ENCODE measurements at regions of chr7 and their contacts with region 1.

Region 1: GRCh38 chr7:141231018-141231792 is 157.3 kb downstream of the TMEM178B start:
- DNase-seq: peak; percentile 28
- ATAC-seq: peak; percentile 97
- H3K4me3 ChIP-seq: no peak overlapping the region; a peak in 1 of 6 replicates
- H3K27ac ChIP-seq: no peak overlapping the region
- H3K4me1 ChIP-seq: peaks cover 13% of the 10 kb centered on the region
- H3K27me3 ChIP-seq: no peaks in the 10 kb centered on the region
- CTCF ChIP-seq: peak; percentile 82
- EP300 ChIP-seq: no peak
- POLR2A ChIP-seq: no peak
- RAD21 ChIP-seq: peak; percentile 68

Region 2: DNA sequence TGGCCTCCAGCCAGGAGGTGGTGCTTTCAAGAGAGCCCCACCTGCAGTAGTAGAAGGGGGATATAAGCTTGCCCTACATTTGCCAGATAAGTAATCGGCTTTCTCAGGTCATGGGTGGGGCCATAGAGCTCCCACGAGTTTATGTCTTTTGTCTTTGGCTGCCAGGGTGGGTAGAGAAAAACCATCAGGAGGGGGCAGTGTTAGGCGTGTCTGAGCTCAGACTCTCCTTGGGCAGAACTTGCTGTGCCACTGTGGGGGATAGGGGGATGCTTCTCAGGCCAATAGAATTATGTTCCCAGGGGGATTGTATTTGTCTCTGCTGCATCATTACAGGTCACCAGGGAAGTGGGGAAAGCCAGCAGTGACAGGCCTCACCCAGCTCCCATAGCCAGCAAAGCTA is 204.2 kb before region 1 on chr7:
- CTCF ChIA-PET with region 1: no interaction called
- POLR2A ChIA-PET with region 1: no interaction called
- in situ Hi-C with region 1: no loop called
- intact Hi-C with region 1: loop called (anchors 1 kb)
- DNase-seq: no peak
- ATAC-seq: peak; percentile 67
- H3K4me3 ChIP-seq: no peak overlapping the region
- H3K27ac ChIP-seq: no peak overlapping the region
- H3K4me1 ChIP-seq: no peaks in the 10 kb centered on the region
- H3K27me3 ChIP-seq: no peaks in the 10 kb centered on the region
- CTCF ChIP-seq: peak; percentile 37
- EP300 ChIP-seq: no peak
- POLR2A ChIP-seq: no peak
- RAD21 ChIP-seq: no peak

Region 3: GRCh38 chr7:141276031-141276430 is 44.8 kb after region 1 on chr7:
- CTCF ChIA-PET with region 1: no interaction called
- POLR2A ChIA-PET with region 1: no interaction called
- in situ Hi-C with region 1: no loop called
- intact Hi-C with region 1: loop called (anchors 1 kb)
- DNase-seq: no peak
- ATAC-seq: no peak
- H3K4me3 ChIP-seq: no peak overlapping the region
- H3K27ac ChIP-seq: no peak overlapping the region
- H3K4me1 ChIP-seq: no peaks in the 10 kb centered on the region
- H3K27me3 ChIP-seq: peaks cover 0 to 6% of the 10 kb centered on the region in 2 experiments; a peak in 1 of 5 replicates
- CTCF ChIP-seq: no peak
- EP300 ChIP-seq: no peak
- POLR2A ChIP-seq: no peak
- RAD21 ChIP-seq: no peak

Measured in HepG2 (cell line).